Activated CD4-positive, alpha-beta memory T cell treated with anti-CD3 and anti-CD28 coated beads, Interleukin-2, amount 10 ng/mL, durations not matched to agents 7 days and 5 days (primary cell): ENCODE measurements at regions of chr1 and their contacts with region 1.

Region 1: GRCh38 chr1:172443626-172444453 is at the start of gene PIGC:
- DNase-seq: peak; percentile 91
- H3K4me3 Mint-ChIP-seq: peak within 1 kb of the TSS; percentile 90
- H3K27ac Mint-ChIP-seq: peak within 1 kb of the TSS; percentile 80
- H3K4me1 Mint-ChIP-seq: peaks cover 32% of the 10 kb centered on the region
- H3K27me3 Mint-ChIP-seq: no peaks in the 10 kb centered on the region
- total RNA-seq, gene PIGC: 24.5 to 26.2 TPM

Region 2: DNA sequence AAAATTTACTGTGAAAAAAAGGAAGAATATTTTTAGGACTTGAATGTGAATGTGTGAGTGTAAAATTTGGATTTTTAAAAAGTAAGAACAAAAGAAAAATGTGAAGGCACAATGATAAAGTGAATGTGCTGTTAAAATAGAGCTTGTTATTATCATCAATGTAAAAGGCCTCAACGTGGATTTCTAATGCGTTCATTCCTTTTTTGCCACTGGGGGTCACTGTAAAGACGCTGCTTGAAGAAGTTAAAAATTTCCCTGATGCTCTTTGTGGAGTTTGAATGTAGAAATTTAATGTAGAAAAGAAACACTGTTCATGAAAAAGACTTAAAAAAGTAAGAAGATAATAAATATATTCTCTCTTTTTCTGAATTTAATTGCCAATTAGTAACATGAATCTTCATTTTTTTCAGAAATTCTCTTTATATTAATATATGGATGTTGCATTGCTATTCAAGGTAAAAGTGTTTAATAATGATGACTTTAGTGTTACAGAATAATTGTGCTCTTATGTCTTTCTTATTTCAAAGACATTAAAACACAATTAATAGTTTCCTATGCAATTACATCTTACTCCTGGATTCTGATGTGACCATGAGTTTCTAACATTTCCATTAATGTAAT is 441.0 kb before region 1 on chr1:
- CTCF ChIA-PET with region 1: interaction called, 16 read pairs
- POLR2A ChIA-PET with region 1: no interaction called
- DNase-seq: no peak
- H3K4me3 Mint-ChIP-seq: no peak overlapping the region
- H3K27ac Mint-ChIP-seq: no peak overlapping the region
- H3K4me1 Mint-ChIP-seq: no peaks in the 10 kb centered on the region
- H3K27me3 Mint-ChIP-seq: no peaks in the 10 kb centered on the region

Region 3: DNA sequence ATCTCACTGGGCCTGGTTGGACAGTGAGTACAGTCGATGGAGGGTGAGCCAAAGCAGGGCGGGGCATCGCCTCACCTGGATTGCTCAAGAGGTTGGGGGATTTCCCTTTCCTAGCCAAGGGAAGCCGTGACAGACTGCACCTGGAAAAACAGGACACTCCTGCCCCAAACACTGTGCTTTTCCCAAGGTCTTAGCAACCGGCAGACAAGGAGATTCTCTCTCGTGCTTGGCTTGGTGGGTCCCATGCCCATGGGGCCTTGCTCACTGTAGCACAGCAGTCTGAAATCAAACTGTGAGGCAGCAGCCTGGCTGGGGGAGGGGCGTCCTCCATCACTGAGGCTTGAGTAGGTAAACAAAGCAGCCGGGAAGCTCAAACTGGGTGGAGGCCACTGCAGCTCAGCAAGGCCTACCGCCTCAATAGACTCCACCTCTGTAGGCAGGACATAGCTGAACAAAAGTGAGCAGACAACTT is 12.1 kb before region 1 on chr1:
- CTCF ChIA-PET with region 1: interaction called, 11 read pairs
- POLR2A ChIA-PET with region 1: interaction called, 6 read pairs
- DNase-seq: no peak
- H3K4me3 Mint-ChIP-seq: no peak overlapping the region
- H3K27ac Mint-ChIP-seq: no peak overlapping the region
- H3K4me1 Mint-ChIP-seq: peaks cover 19% of the 10 kb centered on the region
- H3K27me3 Mint-ChIP-seq: no peaks in the 10 kb centered on the region

Region 4: DNA sequence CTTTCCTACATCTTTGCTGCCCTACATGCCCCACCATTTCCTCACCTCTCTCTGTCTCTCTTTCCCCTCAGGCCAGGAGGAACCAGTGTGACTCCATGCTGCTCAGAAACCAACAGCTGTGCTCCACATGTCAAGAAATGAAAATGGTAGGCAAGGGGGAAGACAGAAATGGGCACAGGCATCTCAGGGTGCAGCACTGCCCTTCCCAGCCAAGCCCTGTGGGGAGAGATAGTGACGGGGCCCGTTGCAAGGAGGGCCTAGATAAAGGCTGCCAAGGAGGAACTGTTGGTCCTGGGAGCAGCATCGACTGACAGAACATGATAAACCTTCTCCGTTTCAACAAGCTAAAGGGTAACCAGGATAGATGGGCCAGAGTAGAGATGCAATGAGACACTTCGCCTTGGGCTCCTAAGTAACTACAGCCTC is 12.5 kb after region 1 on chr1:
- CTCF ChIA-PET with region 1: interaction called, 13 read pairs
- POLR2A ChIA-PET with region 1: no interaction called
- DNase-seq: no peak
- H3K4me3 Mint-ChIP-seq: no peak overlapping the region
- H3K27ac Mint-ChIP-seq: no peak overlapping the region
- H3K4me1 Mint-ChIP-seq: peaks cover 4% of the 10 kb centered on the region
- H3K27me3 Mint-ChIP-seq: peaks cover 8% of the 10 kb centered on the region